Activated CD4-positive, alpha-beta memory T cell treated with anti-CD3 and anti-CD28 coated beads, Interleukin-2, amount 10 ng/mL, durations not matched to agents 7 days and 5 days (primary cell): ENCODE measurements at regions of chr12 and their contacts with region 1.

Region 1: DNA sequence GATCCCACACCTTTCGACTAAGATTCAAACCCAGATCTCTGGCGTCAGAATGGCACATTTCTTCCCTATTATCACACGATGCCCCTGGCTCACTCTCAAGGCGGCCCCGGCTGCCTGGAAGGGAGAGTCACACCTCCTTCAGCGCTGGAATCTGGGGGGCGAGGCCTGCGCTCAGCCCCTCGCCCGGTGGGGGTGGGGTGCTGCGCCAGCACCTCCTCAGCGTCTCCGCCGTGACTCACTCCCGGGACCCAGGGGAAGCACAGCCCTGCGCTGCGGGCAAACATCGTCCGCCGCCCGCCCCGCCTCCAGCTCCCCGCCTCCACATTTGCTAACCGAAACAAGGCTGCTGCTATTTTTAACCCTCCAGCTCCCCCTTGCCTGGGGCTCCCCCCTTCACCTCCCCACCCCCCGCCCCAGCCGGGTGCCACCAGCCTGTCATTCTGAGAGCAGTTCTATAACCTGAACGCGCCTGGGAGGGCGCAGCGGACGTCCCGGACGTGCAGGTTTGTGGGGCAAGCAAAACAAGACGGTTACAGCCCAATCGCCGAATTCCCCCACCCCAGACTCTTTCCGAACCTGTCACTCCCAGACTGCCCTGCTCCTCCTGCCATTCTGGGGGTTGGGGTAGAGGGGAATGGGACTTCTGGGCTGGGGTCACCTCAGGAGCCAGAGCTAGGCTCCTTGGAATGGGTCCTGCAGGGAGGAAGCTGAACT is 6.7 kb downstream of the HDAC7 start:
- DNase-seq: peak; percentile 96
- H3K4me3 Mint-ChIP-seq: peak overlapping the region; percentile 89
- H3K27ac Mint-ChIP-seq: peak overlapping the region; percentile 93
- H3K4me1 Mint-ChIP-seq: peaks cover 82% of the 10 kb centered on the region
- H3K27me3 Mint-ChIP-seq: no peaks in the 10 kb centered on the region

Region 2: DNA sequence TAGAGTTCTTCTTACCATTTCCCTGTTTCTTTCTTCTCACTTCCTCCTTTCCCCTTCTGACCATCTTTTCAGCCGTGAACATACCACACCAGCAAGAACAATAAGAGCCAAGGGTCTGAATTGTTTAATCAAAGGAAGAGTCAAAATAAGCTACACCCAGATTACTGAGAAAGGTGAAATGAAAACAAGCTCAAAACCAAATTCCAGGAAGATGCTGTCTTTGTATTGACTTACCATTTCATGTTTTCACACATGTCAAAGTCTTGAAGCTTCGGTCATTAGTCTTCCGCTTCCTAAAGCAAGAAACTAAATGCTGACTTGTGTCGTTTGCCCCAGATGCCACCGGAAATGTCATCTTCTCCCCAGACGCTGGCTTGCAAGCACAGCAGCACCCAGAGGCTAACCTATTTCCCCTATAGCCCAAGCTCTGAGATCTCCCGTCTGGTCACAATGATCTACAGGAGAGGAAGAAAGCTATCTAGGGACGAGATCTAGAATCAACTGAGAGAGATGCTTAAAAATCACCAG is 596.7 kb before region 1 on chr12:
- CTCF ChIA-PET with region 1: no interaction called
- POLR2A ChIA-PET with region 1: interaction called, 11 read pairs
- DNase-seq: peak; percentile 87
- H3K4me3 Mint-ChIP-seq: peak overlapping the region; percentile 85
- H3K27ac Mint-ChIP-seq: peak overlapping the region; percentile 97
- H3K4me1 Mint-ChIP-seq: peaks cover 37% of the 10 kb centered on the region
- H3K27me3 Mint-ChIP-seq: no peaks in the 10 kb centered on the region

Region 3: GRCh38 chr12:47773062-47773857 is 39.7 kb before region 1 on chr12 and contains the start of gene SLC48A1:
- CTCF ChIA-PET with region 1: interaction called, 34 read pairs
- POLR2A ChIA-PET with region 1: interaction called, 12 read pairs
- DNase-seq: peak; percentile 75
- H3K4me3 Mint-ChIP-seq: peak within 1 kb of the TSS; percentile 91
- H3K27ac Mint-ChIP-seq: peak within 1 kb of the TSS; percentile 36
- H3K4me1 Mint-ChIP-seq: peaks cover 45% of the 10 kb centered on the region
- H3K27me3 Mint-ChIP-seq: peaks cover 5% of the 10 kb centered on the region
- total RNA-seq, gene SLC48A1: 19.4 to 22.6 TPM

Region 4: DNA sequence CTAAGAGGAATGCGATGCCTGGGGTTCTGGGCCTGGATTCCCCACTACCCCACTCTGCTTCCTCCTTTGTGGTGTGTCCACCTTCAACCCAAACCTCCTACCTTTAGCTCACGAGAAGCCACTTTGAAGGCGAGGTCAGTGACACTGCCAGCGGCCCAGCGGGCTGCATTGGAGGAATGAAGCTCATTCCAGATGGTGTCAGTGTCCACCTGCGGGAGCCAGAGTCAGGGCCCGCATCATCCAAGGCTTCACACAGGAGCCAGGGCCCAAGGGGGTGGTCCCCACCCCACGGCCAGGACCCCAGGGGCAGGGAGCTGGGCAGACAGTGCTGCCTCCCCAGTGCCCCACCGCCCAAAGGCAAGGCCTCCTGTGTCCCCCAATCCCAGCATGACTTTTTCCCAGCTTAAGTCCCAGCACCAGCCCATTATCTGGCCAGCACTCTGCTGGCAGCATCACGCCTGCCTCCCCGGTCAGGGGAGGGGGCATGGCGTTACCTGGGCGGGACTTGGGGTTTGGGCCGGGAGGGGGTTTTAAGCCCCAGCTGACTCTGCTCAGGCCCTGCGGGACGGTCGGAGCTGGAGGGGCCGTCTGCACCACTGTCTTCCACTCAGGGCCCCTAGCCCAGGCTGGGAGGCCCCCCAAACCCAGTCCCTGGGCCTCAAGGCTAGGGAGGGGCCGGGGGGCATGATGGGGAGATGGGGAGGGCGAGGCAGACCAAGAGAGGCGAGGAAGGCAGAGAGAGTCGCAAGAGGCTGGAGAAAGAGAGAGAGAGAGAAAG is 23.1 kb before region 1 on chr12:
- CTCF ChIA-PET with region 1: interaction called, 6 read pairs
- POLR2A ChIA-PET with region 1: interaction called, 14 read pairs
- DNase-seq: no peak
- H3K4me3 Mint-ChIP-seq: no peak overlapping the region
- H3K27ac Mint-ChIP-seq: peak overlapping the region; percentile 52
- H3K4me1 Mint-ChIP-seq: peaks cover 14% of the 10 kb centered on the region
- H3K27me3 Mint-ChIP-seq: no peaks in the 10 kb centered on the region

Region 5: GRCh38 chr12:47882781-47883546 is 70.0 kb after region 1 on chr12:
- CTCF ChIA-PET with region 1: interaction called, 10 read pairs
- POLR2A ChIA-PET with region 1: interaction called, 11 read pairs
- DNase-seq: peak; percentile 59
- H3K4me3 Mint-ChIP-seq: peak overlapping the region; percentile 80
- H3K27ac Mint-ChIP-seq: peak overlapping the region; percentile 98
- H3K4me1 Mint-ChIP-seq: peaks cover 83% of the 10 kb centered on the region
- H3K27me3 Mint-ChIP-seq: no peaks in the 10 kb centered on the region